ENCODE measurements at regions of chr2 and their contacts with region 1.

Region 1: GRCh38 chr2:37585982-37586621 is 85.3 kb downstream of the CDC42EP3 start:
- DNase-seq: peak; percentile 85
- H3K4me3 Mint-ChIP-seq: peak overlapping the region; percentile 56
- H3K27ac Mint-ChIP-seq: peak overlapping the region; percentile 92
- H3K4me1 Mint-ChIP-seq: peaks cover 91% of the 10 kb centered on the region
- H3K27me3 Mint-ChIP-seq: no peaks in the 10 kb centered on the region

Region 2: DNA sequence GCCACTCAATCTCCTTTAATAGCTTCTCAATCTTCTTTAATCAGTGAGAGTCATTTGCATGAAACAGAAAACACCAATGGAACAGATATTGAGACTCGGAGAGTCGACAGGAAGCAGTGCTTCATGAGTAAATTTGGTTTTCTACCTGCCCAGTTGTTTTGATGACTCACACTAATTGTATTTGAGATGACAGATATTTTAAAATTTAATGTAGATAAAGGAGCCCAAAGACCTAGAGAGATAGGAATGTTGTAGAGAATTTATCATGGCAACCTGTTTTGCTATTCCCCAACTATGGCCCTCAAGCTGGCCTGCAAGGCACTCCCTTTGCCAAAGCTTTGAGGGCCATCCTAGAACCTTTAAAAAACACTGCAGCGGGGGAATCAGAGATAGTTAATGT is 33.7 kb before region 1 on chr2:
- CTCF ChIA-PET with region 1: no interaction called
- POLR2A ChIA-PET with region 1: no interaction called
- intact Hi-C with region 1: loop called (anchors 2 kb)
- DNase-seq: no peak
- H3K4me3 Mint-ChIP-seq: no peak overlapping the region
- H3K27ac Mint-ChIP-seq: no peak overlapping the region
- H3K4me1 Mint-ChIP-seq: peaks cover 16% of the 10 kb centered on the region
- H3K27me3 Mint-ChIP-seq: no peaks in the 10 kb centered on the region

Region 3: DNA sequence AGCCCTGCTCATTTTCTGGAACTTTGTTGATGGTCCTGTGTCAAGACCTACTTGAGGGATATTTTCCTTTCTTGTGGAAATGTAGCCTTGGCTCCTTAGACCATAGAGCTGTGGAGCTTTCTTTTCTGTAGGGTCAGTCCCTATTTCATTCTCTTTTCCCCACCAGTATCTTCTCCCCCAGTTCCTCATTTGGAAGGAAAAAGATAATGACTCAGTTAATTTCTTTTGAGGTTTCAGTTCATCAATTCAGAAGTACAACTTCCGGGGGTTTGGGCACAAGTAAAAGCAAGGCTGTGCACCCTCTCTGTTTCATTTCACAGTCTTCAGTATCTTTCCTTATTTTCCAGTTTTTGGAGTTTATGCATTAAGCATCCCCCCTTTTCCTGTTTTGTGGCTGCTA is 14.6 kb after region 1 on chr2:
- CTCF ChIA-PET with region 1: interaction called, 7 read pairs
- POLR2A ChIA-PET with region 1: interaction called, 6 read pairs
- intact Hi-C with region 1: loop called (anchors 1 kb)
- DNase-seq: no peak
- H3K4me3 Mint-ChIP-seq: peak overlapping the region; percentile 67
- H3K27ac Mint-ChIP-seq: peak overlapping the region; percentile 80
- H3K4me1 Mint-ChIP-seq: peaks cover 46% of the 10 kb centered on the region
- H3K27me3 Mint-ChIP-seq: no peaks in the 10 kb centered on the region

Region 4: GRCh38 chr2:37623971-37624900 is 38.1 kb after region 1 on chr2:
- CTCF ChIA-PET with region 1: interaction called, 8 read pairs
- POLR2A ChIA-PET with region 1: interaction called, 16 read pairs
- intact Hi-C with region 1: loop called (anchors 1 kb)
- DNase-seq: peak; percentile 50
- H3K4me3 Mint-ChIP-seq: peak overlapping the region; percentile 45
- H3K27ac Mint-ChIP-seq: peak overlapping the region; percentile 83
- H3K4me1 Mint-ChIP-seq: peaks cover 80% of the 10 kb centered on the region
- H3K27me3 Mint-ChIP-seq: no peaks in the 10 kb centered on the region

Region 5: GRCh38 chr2:37688771-37689468 is 102.8 kb after region 1 on chr2:
- CTCF ChIA-PET with region 1: no interaction called
- POLR2A ChIA-PET with region 1: no interaction called
- intact Hi-C with region 1: loop called (anchors 1 kb)
- DNase-seq: no peak
- H3K4me3 Mint-ChIP-seq: no peak overlapping the region
- H3K27ac Mint-ChIP-seq: no peak overlapping the region
- H3K4me1 Mint-ChIP-seq: peaks cover 23% of the 10 kb centered on the region
- H3K27me3 Mint-ChIP-seq: no peaks in the 10 kb centered on the region

Region 6: GRCh38 chr2:37753758-37754157 is 167.7 kb after region 1 on chr2:
- CTCF ChIA-PET with region 1: no interaction called
- POLR2A ChIA-PET with region 1: no interaction called
- intact Hi-C with region 1: no loop called
- DNase-seq: no peak
- H3K4me3 Mint-ChIP-seq: no peak overlapping the region
- H3K27ac Mint-ChIP-seq: no peak overlapping the region
- H3K4me1 Mint-ChIP-seq: no peaks in the 10 kb centered on the region
- H3K27me3 Mint-ChIP-seq: no peaks in the 10 kb centered on the region

Region 7: DNA sequence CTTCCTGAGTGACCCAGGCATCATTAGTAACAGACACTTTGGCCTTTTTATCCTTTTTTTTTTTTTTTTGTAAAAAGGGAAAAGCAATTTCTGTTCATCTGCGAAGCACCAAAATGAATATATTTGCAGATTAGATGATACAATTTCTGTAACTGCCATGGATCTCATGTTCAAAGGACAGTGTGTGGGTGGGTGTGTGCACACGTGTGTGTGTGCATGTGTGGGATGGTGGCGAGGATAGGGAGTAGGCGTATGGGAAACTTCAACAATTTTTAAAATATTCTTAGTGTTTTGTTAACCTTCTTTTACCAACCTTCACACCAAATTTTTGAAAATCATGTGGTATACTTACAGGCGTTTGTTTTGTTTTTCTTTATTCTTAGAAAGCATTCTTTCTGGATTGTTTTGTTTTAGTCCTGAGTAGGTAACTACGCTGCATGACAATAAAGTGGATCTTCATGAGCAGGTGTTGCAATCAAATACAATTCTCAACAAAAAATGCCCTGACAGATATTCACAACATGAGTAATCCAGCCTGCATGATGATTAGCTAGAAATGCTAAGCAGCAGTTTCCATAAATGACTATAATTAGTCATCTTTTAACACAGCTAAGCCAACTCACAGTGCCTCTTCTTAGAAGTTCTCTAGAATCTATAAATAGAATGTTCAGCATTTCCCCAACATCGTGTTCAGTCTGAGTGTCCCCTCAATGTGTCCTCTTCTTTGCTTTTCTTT is 285.5 kb after region 1 on chr2:
- CTCF ChIA-PET with region 1: no interaction called
- POLR2A ChIA-PET with region 1: interaction called, 4 read pairs
- intact Hi-C with region 1: loop called (anchors 1 kb)
- DNase-seq: no peak
- H3K4me3 Mint-ChIP-seq: peak overlapping the region; percentile 38
- H3K27ac Mint-ChIP-seq: peak overlapping the region; percentile 93
- H3K4me1 Mint-ChIP-seq: peaks cover 27% of the 10 kb centered on the region
- H3K27me3 Mint-ChIP-seq: no peaks in the 10 kb centered on the region